Naive thymus-derived CD4-positive, alpha-beta T cell (primary cell): ENCODE measurements at regions of chr10 and their contacts with region 1.

Region 1: DNA sequence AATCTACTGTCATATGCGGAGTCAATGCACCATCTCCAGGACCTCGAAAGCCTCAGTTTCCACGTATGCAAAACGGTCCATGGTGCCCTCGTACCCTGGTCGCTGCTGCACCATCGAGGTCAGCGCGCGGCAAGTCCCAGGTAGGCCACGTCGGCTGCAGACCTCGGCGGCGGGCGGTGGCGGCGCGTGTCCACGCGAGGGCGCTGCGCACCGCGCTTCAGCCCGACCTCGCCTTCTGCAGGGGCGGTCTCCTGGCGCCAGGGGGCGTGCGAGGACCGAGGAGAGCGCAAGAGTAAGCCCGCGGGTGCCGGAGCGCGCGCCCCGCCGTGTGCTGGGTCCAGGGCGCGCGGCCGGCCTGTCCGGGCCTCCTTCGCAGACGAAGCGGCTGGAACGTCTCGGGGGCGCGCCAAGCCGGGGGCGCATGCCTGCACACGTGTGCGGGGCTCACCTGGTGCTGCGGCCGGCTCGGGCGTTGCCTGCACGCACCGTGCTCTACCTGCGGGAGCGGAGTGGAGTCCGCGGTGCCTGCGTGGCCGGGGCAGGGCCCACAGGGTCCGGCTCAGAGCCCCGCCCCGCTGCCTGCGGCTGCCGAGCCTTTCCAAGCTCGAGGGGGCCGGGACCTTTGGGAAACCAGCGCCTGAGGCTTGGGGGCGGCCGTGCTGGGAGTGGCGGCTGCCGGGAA is 54.0 kb downstream of the GLRX3 start:
- DNase-seq: peak; percentile 75 to 97 (median 88)
- ATAC-seq: peak; percentile 99
- H3K4me3 ChIP-seq: peak overlapping the region; percentile 51
- H3K4me3 Mint-ChIP-seq: peak overlapping the region in 6 of 10 donors; percentile 12 to 65 (median 44)
- H3K27ac ChIP-seq: no peak overlapping the region
- H3K27ac Mint-ChIP-seq: no peak overlapping the region
- H3K4me1 ChIP-seq: no peaks in the 10 kb centered on the region
- H3K4me1 Mint-ChIP-seq: peaks cover 0 to 9% (median 7%) of the 10 kb centered on the region in 7 donors
- H3K27me3 ChIP-seq: no peaks in the 10 kb centered on the region
- H3K27me3 Mint-ChIP-seq: peaks cover 6 to 21% (median 9%) of the 10 kb centered on the region in 5 donors

Region 2: DNA sequence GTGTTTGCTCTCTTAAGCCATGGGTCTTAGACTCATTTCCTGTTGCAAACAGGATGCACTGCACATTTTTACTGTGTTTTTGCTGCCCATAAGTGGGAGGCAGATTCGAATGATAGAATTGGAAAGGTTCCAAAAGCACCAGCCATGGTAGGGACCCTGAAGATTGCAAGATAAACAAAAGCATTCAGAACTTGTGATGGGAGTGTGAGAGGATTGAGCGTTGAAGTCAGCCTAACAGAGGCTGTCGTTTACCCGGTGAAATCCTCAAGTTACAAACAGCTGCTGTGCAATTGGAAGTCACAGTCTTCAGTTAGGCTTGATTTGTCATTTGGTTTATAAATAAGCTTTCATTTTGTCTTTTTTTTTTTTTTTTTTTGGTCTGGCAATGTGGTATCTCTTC is 1871.3 kb before region 1 on chr10:
- CTCF ChIA-PET with region 1: no interaction called
- POLR2A ChIA-PET with region 1: no interaction called
- intact Hi-C with region 1: no loop called
- DNase-seq: no peak
- ATAC-seq: no peak
- H3K4me3 ChIP-seq: no peak overlapping the region
- H3K4me3 Mint-ChIP-seq: no peak overlapping the region
- H3K27ac ChIP-seq: no peak overlapping the region
- H3K27ac Mint-ChIP-seq: no peak overlapping the region
- H3K4me1 ChIP-seq: no peaks in the 10 kb centered on the region
- H3K4me1 Mint-ChIP-seq: no peaks in the 10 kb centered on the region
- H3K27me3 ChIP-seq: no peaks in the 10 kb centered on the region
- H3K27me3 Mint-ChIP-seq: peaks cover 0 to 29% (median under 1%) of the 10 kb centered on the region in 5 donors

Region 3: GRCh38 chr10:130141878-130142277 is 48.3 kb before region 1 on chr10:
- CTCF ChIA-PET with region 1: interaction called, 3 read pairs
- POLR2A ChIA-PET with region 1: no interaction called
- intact Hi-C with region 1: loop called in 1 of 2 experiments (anchors 2 kb)
- DNase-seq: no peak
- ATAC-seq: peak; percentile 44
- H3K4me3 ChIP-seq: peak overlapping the region; percentile 19
- H3K4me3 Mint-ChIP-seq: peak overlapping the region in 8 of 10 donors; percentile 3 to 69 (median 35)
- H3K27ac ChIP-seq: no peak overlapping the region
- H3K27ac Mint-ChIP-seq: peak overlapping the region in 7 of 9 donors; percentile 16 to 81 (median 57)
- H3K4me1 ChIP-seq: peaks cover 26 to 36% of the 10 kb centered on the region in 2 donors
- H3K4me1 Mint-ChIP-seq: peaks cover 43 to 80% (median 65%) of the 10 kb centered on the region in 7 donors
- H3K27me3 ChIP-seq: no peaks in the 10 kb centered on the region
- H3K27me3 Mint-ChIP-seq: no peaks in the 10 kb centered on the region

Region 4: DNA sequence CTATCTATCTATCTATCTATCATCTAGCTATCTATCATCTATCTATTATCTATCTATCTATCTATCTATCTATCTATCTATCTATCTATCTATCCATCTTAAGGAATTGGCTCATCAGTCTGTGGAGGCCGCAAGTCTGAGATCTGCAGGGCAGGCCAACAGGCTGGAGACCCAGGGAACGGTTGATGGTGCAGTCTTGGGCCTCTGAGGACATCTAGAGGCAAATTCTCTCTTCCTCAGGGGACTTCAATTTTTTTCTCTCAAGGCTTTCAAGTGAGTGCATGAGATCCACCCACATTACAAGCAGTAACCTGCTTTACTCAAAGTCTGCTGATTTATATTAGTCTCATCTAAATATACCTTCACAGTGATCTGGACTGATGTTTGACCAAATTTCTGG is 143.0 kb after region 1 on chr10:
- CTCF ChIA-PET with region 1: no interaction called
- POLR2A ChIA-PET with region 1: no interaction called
- intact Hi-C with region 1: loop called in 1 of 2 experiments (anchors 10 kb)
- DNase-seq: no peak
- ATAC-seq: no peak
- H3K4me3 ChIP-seq: no peak overlapping the region
- H3K4me3 Mint-ChIP-seq: no peak overlapping the region
- H3K27ac ChIP-seq: no peak overlapping the region
- H3K27ac Mint-ChIP-seq: no peak overlapping the region
- H3K4me1 ChIP-seq: no peaks in the 10 kb centered on the region
- H3K4me1 Mint-ChIP-seq: peaks cover 0 to 2% (median 0%) of the 10 kb centered on the region in 7 donors
- H3K27me3 ChIP-seq: no peaks in the 10 kb centered on the region
- H3K27me3 Mint-ChIP-seq: peaks cover 0 to 13% (median 6%) of the 10 kb centered on the region in 5 donors

Region 5: GRCh38 chr10:131786756-131787605 is 1596.8 kb after region 1 on chr10:
- CTCF ChIA-PET with region 1: no interaction called
- POLR2A ChIA-PET with region 1: no interaction called
- intact Hi-C with region 1: loop called in 1 of 2 experiments (anchors 5 kb)
- DNase-seq: peak in 5 of 9 donors; percentile 13 to 25 (median 17)
- ATAC-seq: no peak
- H3K4me3 ChIP-seq: no peak overlapping the region
- H3K4me3 Mint-ChIP-seq: no peak overlapping the region
- H3K27ac ChIP-seq: no peak overlapping the region
- H3K27ac Mint-ChIP-seq: peak overlapping the region in 1 of 9 donors; percentile 25
- H3K4me1 ChIP-seq: no peaks in the 10 kb centered on the region
- H3K4me1 Mint-ChIP-seq: no peaks in the 10 kb centered on the region
- H3K27me3 ChIP-seq: no peaks in the 10 kb centered on the region
- H3K27me3 Mint-ChIP-seq: peaks cover 0 to 25% (median 13%) of the 10 kb centered on the region in 5 donors

Region 6: DNA sequence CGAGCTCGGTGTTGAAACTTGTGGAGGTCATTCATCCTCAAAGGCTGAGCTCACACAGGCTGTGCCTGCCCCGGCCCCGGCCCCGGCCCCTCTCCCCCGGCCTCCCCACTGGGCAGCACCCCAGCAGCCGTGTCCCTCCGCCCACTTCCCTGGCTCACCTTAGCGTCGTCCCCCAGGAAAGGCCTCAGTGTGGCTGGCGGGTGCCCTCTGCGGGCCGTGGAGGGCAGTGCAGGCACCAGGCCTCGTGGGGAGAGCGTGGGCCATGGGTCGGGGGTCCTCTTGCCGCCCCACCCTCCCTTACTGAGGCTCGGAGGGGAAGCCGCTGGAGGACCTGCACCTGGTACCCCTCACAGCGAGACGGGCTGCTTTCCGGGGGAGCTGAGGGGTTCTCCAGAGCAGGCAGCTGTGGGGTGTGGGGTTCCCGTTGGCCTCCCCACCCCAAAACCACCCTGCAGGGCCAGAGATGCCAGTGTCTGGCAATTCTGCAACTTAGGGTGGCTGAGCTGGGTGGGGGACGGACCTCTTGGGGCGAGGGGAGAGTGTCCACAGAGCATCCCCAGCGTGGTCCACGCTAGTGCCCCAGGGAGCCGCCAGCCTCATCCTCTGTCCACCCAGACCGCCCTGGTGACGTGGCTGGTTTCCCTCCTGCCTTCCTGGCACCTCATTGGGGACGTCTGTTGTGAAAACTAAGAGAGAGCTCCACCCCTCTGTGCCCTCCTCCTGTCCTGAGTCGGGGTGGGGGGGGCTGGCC is 1952.4 kb after region 1 on chr10:
- CTCF ChIA-PET with region 1: no interaction called
- POLR2A ChIA-PET with region 1: no interaction called
- intact Hi-C with region 1: loop called in 1 of 2 experiments (anchors 5 kb)
- DNase-seq: peak in 8 of 9 donors; percentile 31 to 64 (median 48)
- ATAC-seq: peak; percentile 81
- H3K4me3 ChIP-seq: no peak overlapping the region
- H3K4me3 Mint-ChIP-seq: no peak overlapping the region
- H3K27ac ChIP-seq: no peak overlapping the region
- H3K27ac Mint-ChIP-seq: no peak overlapping the region
- H3K4me1 ChIP-seq: no peaks in the 10 kb centered on the region
- H3K4me1 Mint-ChIP-seq: no peaks in the 10 kb centered on the region
- H3K27me3 ChIP-seq: no peaks in the 10 kb centered on the region
- H3K27me3 Mint-ChIP-seq: peaks cover 0 to 5% (median 0%) of the 10 kb centered on the region in 5 donors